Right ventricle myocardium inferior (tissue), 1 donor: ENCODE measurements at regions of chr5 and their contacts with region 1.

Region 1: GRCh38 chr5:172770675-172771438 is at the start of gene DUSP1:
- DNase-seq: peak; percentile 100
- ATAC-seq: peak; percentile 73
- total RNA-seq, gene DUSP1: 103 TPM

Region 2: GRCh38 chr5:172509405-172509781 is 261.5 kb before region 1 on chr5:
- intact Hi-C with region 1: no loop called
- DNase-seq: no peak
- ATAC-seq: no peak

Region 3: GRCh38 chr5:172795318-172795977 is 24.6 kb after region 1 on chr5:
- intact Hi-C with region 1: loop called (anchors 2 kb)
- DNase-seq: peak; percentile 95
- ATAC-seq: peak; percentile 95

Region 4: GRCh38 chr5:172833686-172834414 is 63.0 kb after region 1 on chr5 and contains the start of gene ERGIC1:
- intact Hi-C with region 1: loop called (anchors 2 kb)
- DNase-seq: peak; percentile 95
- ATAC-seq: peak; percentile 94
- total RNA-seq, gene ERGIC1: 74.8 TPM

Region 5: GRCh38 chr5:172860520-172861443 is 89.9 kb after region 1 on chr5:
- intact Hi-C with region 1: loop called (anchors 1 kb)
- DNase-seq: peak; percentile 91
- ATAC-seq: peak; percentile 93

Region 6: GRCh38 chr5:172902497-172903200 is 131.8 kb after region 1 on chr5:
- intact Hi-C with region 1: loop called (anchors 2 kb)
- DNase-seq: peak; percentile 85
- ATAC-seq: peak; percentile 73

Region 7: DNA sequence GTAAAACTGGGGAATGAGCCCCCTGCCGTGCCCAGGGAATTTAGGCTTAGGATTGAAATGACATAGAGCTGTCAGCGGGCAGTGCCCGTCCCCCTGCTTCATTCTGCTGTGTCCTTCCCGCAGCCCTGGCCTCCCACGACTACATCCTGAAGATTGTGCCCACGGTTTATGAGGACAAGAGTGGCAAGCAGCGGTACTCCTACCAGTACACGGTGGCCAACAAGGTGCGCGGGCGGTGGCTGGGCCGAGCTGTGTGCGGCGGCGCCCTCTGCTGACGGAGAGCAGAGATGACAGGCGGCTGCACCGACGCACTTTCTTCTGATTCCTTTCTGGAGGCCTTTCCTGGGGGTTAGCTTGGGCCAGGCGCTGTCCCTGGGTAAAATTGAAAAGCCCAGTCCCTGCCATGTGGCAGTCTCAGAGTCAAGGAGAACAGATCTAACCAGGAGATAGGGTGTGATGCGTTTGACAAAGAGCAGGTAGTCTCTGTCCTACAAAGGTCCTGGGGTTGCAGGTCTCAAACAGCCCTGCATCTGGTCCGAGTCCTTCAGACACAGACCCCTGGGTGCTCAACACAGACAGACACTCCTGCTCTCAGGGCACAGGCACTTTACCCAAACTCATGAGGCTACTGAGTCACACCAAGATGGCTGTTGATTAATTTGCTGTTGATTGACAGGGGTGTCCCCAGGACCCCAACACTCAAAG is 161.6 kb after region 1 on chr5:
- intact Hi-C with region 1: loop called (anchors 2 kb)
- DNase-seq: peak; percentile 94
- ATAC-seq: peak; percentile 86